Right cardiac atrium (tissue), 5 donors: ENCODE measurements at regions of chr20 and their contacts with region 1.

Region 1: DNA sequence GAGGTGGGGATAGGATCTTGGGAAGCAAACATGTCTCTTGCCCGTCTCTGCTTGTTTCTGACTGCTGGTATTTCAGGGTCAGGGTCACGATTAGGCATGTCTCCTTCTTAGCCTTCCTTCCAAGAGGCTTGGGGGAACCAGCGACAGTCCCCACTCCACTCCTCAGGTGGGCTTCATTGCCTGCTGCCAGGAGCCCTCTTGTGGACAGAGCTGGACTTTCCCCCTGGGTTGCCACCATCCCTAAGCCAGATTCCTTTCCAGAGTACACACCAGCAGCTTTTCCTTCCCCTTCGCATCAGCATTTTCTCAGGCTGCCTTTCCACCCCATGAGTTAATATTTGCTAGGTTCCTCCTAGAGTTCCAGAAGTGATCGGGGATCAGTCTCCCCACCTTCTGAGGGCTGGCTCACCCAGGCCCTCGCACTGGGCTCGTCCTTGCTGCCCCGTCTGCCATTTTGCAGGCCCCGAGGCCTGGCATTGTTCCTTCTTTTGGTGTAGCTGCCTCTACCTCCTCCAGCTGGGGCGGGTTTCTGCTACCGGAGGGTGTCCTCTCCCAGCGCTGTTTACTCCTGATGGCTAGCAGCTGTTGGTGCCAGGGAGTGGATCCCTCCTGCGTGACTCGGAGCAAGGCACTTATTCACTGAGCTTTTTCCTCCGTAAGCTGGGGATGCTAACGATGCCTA is 8.8 kb upstream of the C20orf144 start:
- DNase-seq: peak in 2 of 3 donors; percentile 78 to 90
- ATAC-seq: peak; percentile 63 to 66
- H3K4me3 ChIP-seq: no peak overlapping the region
- H3K27ac ChIP-seq: no peak overlapping the region
- H3K4me1 ChIP-seq: peaks cover 3% of the 10 kb centered on the region
- H3K27me3 ChIP-seq: no peaks in the 10 kb centered on the region

Region 2: DNA sequence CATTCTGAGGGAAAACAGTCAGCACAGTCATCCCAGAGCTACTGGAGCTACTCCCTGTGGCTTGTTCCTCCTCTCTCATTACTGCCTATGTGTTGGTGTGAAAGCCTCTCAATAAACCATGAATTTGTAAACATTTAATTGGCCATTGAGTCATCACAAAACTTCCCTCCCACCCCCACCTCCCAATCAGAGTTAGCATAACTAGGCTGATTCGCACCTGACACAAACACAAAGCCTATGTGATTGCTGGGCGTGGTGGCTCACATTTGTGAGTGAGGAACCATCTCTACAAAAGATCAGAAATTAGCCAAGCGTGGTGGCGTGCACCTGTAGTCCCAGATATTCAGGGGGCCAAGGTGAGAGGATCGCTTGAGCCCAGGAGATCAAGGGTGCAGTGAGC is 192.6 kb before region 1 on chr20:
- intact Hi-C with region 1: loop called in 3 of 4 experiments (anchors 5 kb)
- DNase-seq: no peak
- ATAC-seq: no peak
- H3K4me3 ChIP-seq: no peak overlapping the region
- H3K27ac ChIP-seq: no peak overlapping the region
- H3K4me1 ChIP-seq: no peaks in the 10 kb centered on the region
- H3K27me3 ChIP-seq: no peaks in the 10 kb centered on the region